Naive thymus-derived CD4-positive, alpha-beta T cell (primary cell): ENCODE measurements at regions of chr4 and their contacts with region 1.

Region 1: GRCh38 chr4:74311696-74312313 is 3.5 kb downstream of the EPGN start:
- DNase-seq: peak in 7 of 9 donors; percentile 27 to 57 (median 48)
- ATAC-seq: peak; percentile 63
- H3K4me3 ChIP-seq: no peak overlapping the region
- H3K4me3 Mint-ChIP-seq: no peak overlapping the region
- H3K27ac ChIP-seq: no peak overlapping the region
- H3K27ac Mint-ChIP-seq: no peak overlapping the region
- H3K4me1 ChIP-seq: peaks cover 0 to 11% of the 10 kb centered on the region in 2 donors
- H3K4me1 Mint-ChIP-seq: peaks cover 7 to 20% (median 17%) of the 10 kb centered on the region in 7 donors
- H3K27me3 ChIP-seq: no peaks in the 10 kb centered on the region
- H3K27me3 Mint-ChIP-seq: no peaks in the 10 kb centered on the region

Region 2: DNA sequence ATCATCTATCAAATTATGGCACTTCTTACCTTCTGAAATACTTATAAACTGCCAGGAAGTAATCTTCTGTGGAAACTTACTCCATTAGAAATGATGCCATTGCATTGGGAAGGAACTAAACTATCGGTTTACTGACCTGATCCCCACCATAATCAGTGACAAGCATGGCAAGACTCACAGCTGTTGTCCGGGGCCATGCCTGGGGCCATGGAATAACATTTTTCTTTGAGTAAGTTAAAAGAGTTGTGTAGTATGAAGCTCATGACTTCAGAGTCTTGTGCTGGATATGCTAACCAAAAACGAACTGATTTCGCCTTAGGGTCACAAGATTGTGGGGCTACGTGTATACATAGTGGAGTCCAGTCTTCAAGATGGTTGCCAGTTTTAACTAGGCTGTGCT is 138.5 kb before region 1 on chr4:
- CTCF ChIA-PET with region 1: no interaction called
- POLR2A ChIA-PET with region 1: no interaction called
- intact Hi-C with region 1: no loop called
- DNase-seq: no peak
- ATAC-seq: no peak
- H3K4me3 ChIP-seq: no peak overlapping the region
- H3K4me3 Mint-ChIP-seq: no peak overlapping the region
- H3K27ac ChIP-seq: no peak overlapping the region
- H3K27ac Mint-ChIP-seq: no peak overlapping the region
- H3K4me1 ChIP-seq: no peaks in the 10 kb centered on the region
- H3K4me1 Mint-ChIP-seq: no peaks in the 10 kb centered on the region
- H3K27me3 ChIP-seq: no peaks in the 10 kb centered on the region
- H3K27me3 Mint-ChIP-seq: no peaks in the 10 kb centered on the region

Region 3: GRCh38 chr4:74189331-74190043 is 122.3 kb before region 1 on chr4:
- CTCF ChIA-PET with region 1: no interaction called
- POLR2A ChIA-PET with region 1: no interaction called
- intact Hi-C with region 1: loop called (anchors 1 kb)
- DNase-seq: peak in 5 of 9 donors; percentile 17 to 45 (median 34)
- ATAC-seq: peak; percentile 68
- H3K4me3 ChIP-seq: no peak overlapping the region
- H3K4me3 Mint-ChIP-seq: no peak overlapping the region
- H3K27ac ChIP-seq: no peak overlapping the region
- H3K27ac Mint-ChIP-seq: no peak overlapping the region
- H3K4me1 ChIP-seq: no peaks in the 10 kb centered on the region
- H3K4me1 Mint-ChIP-seq: no peaks in the 10 kb centered on the region
- H3K27me3 ChIP-seq: no peaks in the 10 kb centered on the region
- H3K27me3 Mint-ChIP-seq: peaks cover 0 to 2% (median 0%) of the 10 kb centered on the region in 5 donors

Region 4: DNA sequence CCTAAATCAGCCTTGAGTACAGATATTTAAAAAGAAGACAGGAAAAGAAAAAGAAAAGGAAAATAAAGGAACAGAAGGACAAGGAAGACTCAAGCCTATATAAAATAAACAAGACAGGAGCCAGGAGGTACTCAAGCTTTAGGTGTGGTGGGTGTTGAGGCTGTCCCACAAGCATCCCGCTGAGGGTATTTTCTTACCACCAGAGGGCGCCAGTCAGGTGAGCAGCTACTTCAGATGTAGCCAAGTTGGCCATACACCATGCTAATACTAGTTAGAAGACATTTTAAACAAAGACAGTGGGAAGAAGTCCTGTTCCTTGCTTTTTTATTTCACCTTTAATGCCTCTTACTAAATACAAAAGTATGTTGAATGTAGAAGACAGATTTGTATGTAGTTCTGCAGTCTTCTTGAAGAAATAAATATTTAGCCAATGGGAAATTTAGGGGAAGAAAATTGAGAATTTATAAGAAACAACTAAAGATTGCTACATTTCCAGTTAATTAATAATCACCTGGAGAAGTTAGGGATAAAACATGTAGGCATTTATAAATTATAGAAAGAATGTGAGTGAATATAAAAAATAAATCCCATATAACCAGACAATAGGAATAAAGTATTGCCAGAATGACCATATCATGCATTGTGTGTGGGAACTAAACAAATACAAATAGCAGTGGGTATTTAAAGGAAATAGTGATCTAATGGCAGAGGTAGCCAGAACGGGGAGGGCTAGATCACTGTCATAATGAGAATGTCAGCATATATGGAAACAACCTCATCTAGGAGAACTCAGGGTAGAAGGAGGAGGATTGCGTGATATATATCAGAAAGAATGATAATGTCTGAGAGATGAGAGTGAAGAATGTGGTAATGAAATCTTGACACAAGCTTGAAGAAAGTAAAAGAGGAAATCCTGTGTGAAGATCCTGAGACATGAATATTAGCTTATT is 82.8 kb before region 1 on chr4:
- CTCF ChIA-PET with region 1: interaction called, 13 read pairs
- POLR2A ChIA-PET with region 1: no interaction called
- intact Hi-C with region 1: loop called (anchors 1 kb)
- DNase-seq: peak; percentile 37 to 79 (median 68)
- ATAC-seq: peak; percentile 76
- H3K4me3 ChIP-seq: no peak overlapping the region
- H3K4me3 Mint-ChIP-seq: no peak overlapping the region
- H3K27ac ChIP-seq: no peak overlapping the region
- H3K27ac Mint-ChIP-seq: peak overlapping the region in 1 of 9 donors; percentile 15
- H3K4me1 ChIP-seq: no peaks in the 10 kb centered on the region
- H3K4me1 Mint-ChIP-seq: peaks cover 0 to 7% (median 0%) of the 10 kb centered on the region in 7 donors
- H3K27me3 ChIP-seq: no peaks in the 10 kb centered on the region
- H3K27me3 Mint-ChIP-seq: no peaks in the 10 kb centered on the region